ENCODE measurements at regions of chr10 and their contacts with region 1.

Region 1: DNA sequence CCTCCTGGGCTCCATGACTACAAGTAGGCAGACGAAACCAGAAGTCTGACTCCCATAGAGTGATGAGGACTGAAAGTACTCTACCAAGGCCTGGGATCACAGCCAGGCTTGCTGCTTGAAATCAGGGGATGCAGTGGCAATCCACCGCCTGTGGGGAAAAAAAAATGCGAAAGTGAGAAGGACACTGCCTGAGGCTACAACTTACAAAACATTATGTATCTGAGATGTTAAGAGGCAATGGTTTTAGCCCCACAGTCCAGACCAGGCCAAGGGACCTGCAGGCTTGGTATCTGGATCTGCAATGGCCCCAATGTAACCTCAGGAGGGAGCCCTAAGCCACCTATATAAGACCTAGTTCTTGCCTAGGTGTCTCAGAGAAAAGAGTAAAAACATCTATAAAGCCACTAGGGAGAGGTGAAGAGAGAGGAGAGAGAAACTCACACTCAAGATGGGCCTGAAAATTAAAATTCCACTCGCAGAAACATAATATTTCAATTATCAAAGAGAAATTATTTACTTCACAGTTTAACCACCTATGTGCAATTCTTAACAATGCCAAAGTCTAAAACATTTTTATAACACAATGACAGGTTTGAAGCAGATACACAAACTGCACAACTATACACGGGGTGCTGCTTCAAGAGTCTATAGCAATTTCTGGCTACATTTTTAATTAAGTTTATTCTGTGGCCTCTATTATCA is 13.9 kb downstream of the DNAJC1 start:
- DNase-seq: peak in 4 of 5 donors; percentile 13 to 33 (median 24)
- H3K4me3 ChIP-seq: no peak overlapping the region
- H3K4me3 Mint-ChIP-seq: no peak overlapping the region
- H3K27ac ChIP-seq: no peak overlapping the region
- H3K27ac Mint-ChIP-seq: peak overlapping the region in 2 of 7 donors; percentile 52 to 94
- H3K4me1 ChIP-seq: peaks cover 5% of the 10 kb centered on the region
- H3K4me1 Mint-ChIP-seq: peaks cover 6 to 12% (median 10%) of the 10 kb centered on the region in 4 donors
- H3K27me3 ChIP-seq: no peaks in the 10 kb centered on the region
- H3K27me3 Mint-ChIP-seq: no peaks in the 10 kb centered on the region

Region 2: GRCh38 chr10:22029445-22030236 is 40.0 kb after region 1 on chr10:
- CTCF ChIA-PET with region 1: no interaction called
- POLR2A ChIA-PET with region 1: no interaction called
- intact Hi-C with region 1: no loop called
- DNase-seq: peak in 3 of 5 donors; percentile 17 to 27 (median 26)
- H3K4me3 ChIP-seq: no peak overlapping the region
- H3K4me3 Mint-ChIP-seq: peak overlapping the region in 2 of 8 donors; percentile 0 to 21
- H3K27ac ChIP-seq: no peak overlapping the region
- H3K27ac Mint-ChIP-seq: peak overlapping the region in 1 of 7 donors; percentile 7
- H3K4me1 ChIP-seq: no peaks in the 10 kb centered on the region
- H3K4me1 Mint-ChIP-seq: peaks cover 2 to 8% (median 6%) of the 10 kb centered on the region in 4 donors
- H3K27me3 ChIP-seq: no peaks in the 10 kb centered on the region
- H3K27me3 Mint-ChIP-seq: peaks cover 17 to 19% of the 10 kb centered on the region in 2 donors

Region 3: DNA sequence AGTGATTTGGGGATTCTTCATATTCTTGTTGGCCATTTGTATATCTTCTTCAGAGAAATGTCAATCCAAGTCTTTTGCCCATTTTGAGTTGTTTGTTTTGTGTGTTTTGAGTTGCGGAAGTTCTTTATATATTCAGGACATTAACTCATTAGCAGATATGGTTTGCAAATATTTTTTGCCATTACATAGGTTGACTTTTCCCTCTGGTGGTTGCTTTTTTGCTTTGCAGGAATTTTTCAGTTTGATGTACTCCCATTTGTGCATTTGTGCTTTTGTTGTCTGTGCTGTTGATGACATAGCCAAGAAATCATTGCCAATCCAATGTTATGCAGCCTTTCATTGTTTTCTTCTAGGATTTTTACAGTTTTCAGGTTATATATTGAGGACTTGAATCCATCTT is 77.5 kb after region 1 on chr10:
- CTCF ChIA-PET with region 1: interaction called, 5 read pairs
- POLR2A ChIA-PET with region 1: no interaction called
- intact Hi-C with region 1: loop called (anchors 2 kb)
- DNase-seq: no peak
- H3K4me3 ChIP-seq: no peak overlapping the region
- H3K4me3 Mint-ChIP-seq: no peak overlapping the region
- H3K27ac ChIP-seq: no peak overlapping the region
- H3K27ac Mint-ChIP-seq: no peak overlapping the region
- H3K4me1 ChIP-seq: no peaks in the 10 kb centered on the region
- H3K4me1 Mint-ChIP-seq: no peaks in the 10 kb centered on the region
- H3K27me3 ChIP-seq: no peaks in the 10 kb centered on the region
- H3K27me3 Mint-ChIP-seq: peaks cover 0 to 2% of the 10 kb centered on the region in 2 donors

Region 4: GRCh38 chr10:22420787-22421517 is 431.3 kb after region 1 on chr10:
- CTCF ChIA-PET with region 1: interaction called, 10 read pairs
- POLR2A ChIA-PET with region 1: no interaction called
- intact Hi-C with region 1: loop called (anchors 1 kb)
- DNase-seq: peak in 4 of 5 donors; percentile 37 to 41 (median 39)
- H3K4me3 ChIP-seq: no peak overlapping the region
- H3K4me3 Mint-ChIP-seq: no peak overlapping the region
- H3K27ac ChIP-seq: no peak overlapping the region
- H3K27ac Mint-ChIP-seq: no peak overlapping the region
- H3K4me1 ChIP-seq: no peaks in the 10 kb centered on the region
- H3K4me1 Mint-ChIP-seq: no peaks in the 10 kb centered on the region
- H3K27me3 ChIP-seq: no peaks in the 10 kb centered on the region
- H3K27me3 Mint-ChIP-seq: no peaks in the 10 kb centered on the region

Region 5: GRCh38 chr10:22550732-22551131 is 561.1 kb after region 1 on chr10:
- CTCF ChIA-PET with region 1: interaction called, 13 read pairs
- POLR2A ChIA-PET with region 1: no interaction called
- intact Hi-C with region 1: no loop called
- DNase-seq: peak; percentile 54 to 66 (median 59)
- H3K4me3 ChIP-seq: no peak overlapping the region
- H3K4me3 Mint-ChIP-seq: no peak overlapping the region
- H3K27ac ChIP-seq: no peak overlapping the region
- H3K27ac Mint-ChIP-seq: peak overlapping the region in 4 of 7 donors; percentile 2 to 86 (median 42)
- H3K4me1 ChIP-seq: no peaks in the 10 kb centered on the region
- H3K4me1 Mint-ChIP-seq: peaks cover 12 to 15% (median 13%) of the 10 kb centered on the region in 4 donors
- H3K27me3 ChIP-seq: no peaks in the 10 kb centered on the region
- H3K27me3 Mint-ChIP-seq: no peaks in the 10 kb centered on the region

Region 6: GRCh38 chr10:23067939-23068775 is 1078.6 kb after region 1 on chr10:
- CTCF ChIA-PET with region 1: interaction called, 7 read pairs
- POLR2A ChIA-PET with region 1: no interaction called
- intact Hi-C with region 1: loop called (anchors 1 kb)
- DNase-seq: peak; percentile 43 to 51 (median 49)
- H3K4me3 ChIP-seq: no peak overlapping the region
- H3K4me3 Mint-ChIP-seq: peak overlapping the region in 1 of 8 donors; percentile 10
- H3K27ac ChIP-seq: no peak overlapping the region
- H3K27ac Mint-ChIP-seq: peak overlapping the region in 1 of 7 donors; percentile 41
- H3K4me1 ChIP-seq: no peaks in the 10 kb centered on the region
- H3K4me1 Mint-ChIP-seq: peaks cover 0 to 7% (median 1%) of the 10 kb centered on the region in 4 donors
- H3K27me3 ChIP-seq: no peaks in the 10 kb centered on the region
- H3K27me3 Mint-ChIP-seq: peaks cover 4 to 15% of the 10 kb centered on the region in 2 donors

Measured in CD4-positive, alpha-beta memory T cell (primary cell).